HEK293T (cell line): ENCODE measurements at regions of chr17 and their contacts with region 1.

Region 1: DNA sequence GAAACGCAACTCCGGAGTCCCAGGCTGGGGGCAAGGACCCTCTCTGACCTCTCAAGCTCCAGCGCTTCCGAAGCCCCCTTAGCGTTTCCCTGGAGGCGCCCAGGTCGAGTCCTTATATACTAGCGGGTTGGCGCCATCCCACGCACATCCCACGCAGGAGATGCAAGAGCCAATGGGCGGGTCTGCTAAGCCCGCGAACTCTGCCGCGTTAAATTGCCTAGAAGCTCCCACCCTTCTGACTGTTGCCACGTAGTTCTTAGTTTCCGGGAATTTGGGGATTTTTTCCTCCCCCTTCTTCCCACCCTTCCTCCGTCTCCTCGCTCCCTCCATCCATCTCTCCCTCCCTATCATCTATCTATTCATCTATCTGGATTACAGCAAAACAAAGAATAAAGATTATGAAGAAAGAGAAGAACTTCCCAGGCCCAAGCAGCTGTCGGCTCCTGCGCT is at the start of gene SLFN11:
- DNase-seq: no peak

Region 2: GRCh38 chr17:35242805-35243560 is 130.6 kb before region 1 on chr17 and contains the start of gene SLFN5:
- CTCF ChIA-PET with region 1: no interaction called
- POLR2A ChIA-PET with region 1: interaction called, 10 read pairs
- DNase-seq: peak; percentile 82

Region 3: DNA sequence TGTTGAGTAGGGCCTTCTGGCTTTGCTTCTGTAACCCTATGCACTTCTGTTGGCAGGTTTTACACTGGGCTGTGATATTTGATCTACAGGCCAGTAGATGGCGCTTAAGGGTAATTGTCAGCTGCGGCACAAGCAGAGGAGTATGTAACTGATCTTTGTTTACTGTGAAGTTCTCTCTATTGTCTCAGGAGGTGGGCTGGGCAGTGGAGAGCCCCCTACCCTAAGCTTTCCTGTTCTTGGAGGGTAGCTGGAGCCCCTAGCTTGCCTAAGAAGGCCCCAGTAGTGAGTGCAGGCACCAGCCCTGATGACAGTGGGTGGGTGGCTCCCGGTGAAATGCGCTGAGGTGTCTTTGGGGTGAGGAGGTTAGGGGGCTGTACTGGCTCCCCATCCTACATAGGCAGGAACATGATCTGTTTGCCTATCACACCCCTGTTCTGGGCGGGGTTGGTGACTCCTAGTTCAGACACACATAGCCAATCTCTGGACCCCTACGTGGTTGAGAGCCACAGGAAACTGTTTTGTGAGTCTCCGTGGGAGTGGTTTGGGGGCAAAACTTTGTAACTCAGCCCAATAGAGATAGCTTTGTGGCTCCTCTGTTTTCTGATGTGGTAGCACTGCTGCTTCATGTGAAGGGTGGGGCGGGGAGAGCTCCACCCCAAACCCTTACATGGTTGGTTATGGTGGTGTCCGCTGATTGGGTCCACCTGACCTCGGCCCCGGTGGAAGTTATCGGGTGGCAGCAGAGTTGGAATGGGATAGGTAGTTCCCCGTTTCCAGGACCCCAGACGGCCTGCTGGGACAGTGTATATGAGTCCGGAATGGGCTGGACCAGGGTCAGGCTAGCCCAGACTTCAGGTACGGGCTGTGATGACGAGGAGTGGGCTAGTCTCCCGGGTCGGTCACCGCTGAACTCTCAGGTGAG is 60.5 kb before region 1 on chr17:
- CTCF ChIA-PET with region 1: no interaction called
- POLR2A ChIA-PET with region 1: no interaction called
- DNase-seq: peak; percentile 33

Region 4: DNA sequence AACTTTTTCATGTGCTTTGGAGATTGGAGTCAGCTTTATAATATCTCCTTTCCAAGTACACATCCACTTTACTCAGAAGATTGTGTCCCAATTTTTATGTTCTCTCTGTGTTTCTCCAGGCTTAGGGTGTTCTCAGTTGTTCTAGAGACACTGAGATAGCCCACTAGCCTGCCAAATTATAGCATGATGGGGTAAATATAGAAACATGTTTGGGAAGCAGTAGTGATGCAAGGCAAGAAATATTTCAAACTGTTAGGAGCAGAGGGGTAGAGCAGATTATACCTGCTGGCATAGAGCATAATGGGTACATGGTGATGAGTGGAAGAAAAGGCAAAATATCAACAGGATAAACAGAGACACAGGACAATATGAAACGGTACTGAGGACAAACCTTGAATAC is 12.5 kb before region 1 on chr17:
- CTCF ChIA-PET with region 1: no interaction called
- POLR2A ChIA-PET with region 1: interaction called, 20 read pairs
- DNase-seq: no peak

Region 5: DNA sequence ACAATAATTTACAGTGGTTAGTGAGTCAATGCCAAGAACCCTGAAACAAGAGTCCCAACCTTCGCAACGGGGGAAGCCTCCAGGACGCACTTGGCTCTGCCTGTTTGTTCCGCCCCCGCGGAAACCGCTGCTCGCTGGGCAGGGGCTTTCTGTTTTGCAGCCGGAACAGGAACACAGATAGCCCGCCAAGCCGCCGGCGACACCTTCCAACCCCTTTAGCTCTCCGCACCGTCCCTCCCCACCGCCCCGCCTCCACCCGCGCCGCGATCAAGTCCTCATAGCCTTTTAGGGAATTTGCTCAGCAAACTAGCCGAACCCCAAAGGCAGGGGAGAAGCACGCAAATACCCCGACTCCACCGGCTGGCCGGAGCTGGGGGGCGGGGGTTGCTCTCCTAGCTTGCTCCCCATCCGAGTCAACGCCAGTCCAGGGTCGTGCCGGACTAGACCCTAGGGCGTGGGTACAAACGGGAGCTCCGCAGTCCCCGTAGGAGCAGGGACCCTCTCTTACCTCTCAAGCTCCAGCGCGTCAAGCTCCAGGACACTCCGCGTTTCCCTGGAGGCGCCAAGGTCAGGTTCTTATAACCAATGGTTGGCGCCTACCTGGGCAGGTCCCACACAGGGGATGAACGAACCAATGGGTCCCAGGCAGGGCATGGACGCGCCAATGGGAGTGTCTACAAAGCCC is 74.8 kb after region 1 on chr17 and contains the start of gene SLFN13:
- CTCF ChIA-PET with region 1: no interaction called
- POLR2A ChIA-PET with region 1: no interaction called
- DNase-seq: no peak

Region 6: DNA sequence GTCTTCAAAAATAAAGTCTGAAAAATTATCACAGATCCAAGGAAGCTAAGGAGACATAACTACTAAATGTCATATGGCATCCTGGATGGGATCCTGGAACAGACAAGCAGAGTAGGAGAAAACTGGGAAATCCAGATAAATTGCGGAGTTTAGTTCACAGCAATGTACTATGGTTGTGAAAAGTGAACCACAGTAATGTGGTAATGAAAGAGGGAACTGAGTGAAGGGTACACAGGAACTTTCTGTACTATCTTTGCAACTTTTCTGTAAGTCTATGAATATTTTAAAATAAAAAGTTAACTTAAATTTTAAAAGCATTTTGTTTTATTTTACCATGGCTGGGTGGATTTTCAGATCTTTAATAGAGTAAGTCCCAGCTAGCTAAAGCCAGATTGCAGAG is 147.6 kb after region 1 on chr17:
- CTCF ChIA-PET with region 1: no interaction called
- POLR2A ChIA-PET with region 1: interaction called, 16 read pairs
- DNase-seq: no peak